GM18951 (cell line): ENCODE measurements at regions of chr12 and their contacts with region 1.

Region 1: DNA sequence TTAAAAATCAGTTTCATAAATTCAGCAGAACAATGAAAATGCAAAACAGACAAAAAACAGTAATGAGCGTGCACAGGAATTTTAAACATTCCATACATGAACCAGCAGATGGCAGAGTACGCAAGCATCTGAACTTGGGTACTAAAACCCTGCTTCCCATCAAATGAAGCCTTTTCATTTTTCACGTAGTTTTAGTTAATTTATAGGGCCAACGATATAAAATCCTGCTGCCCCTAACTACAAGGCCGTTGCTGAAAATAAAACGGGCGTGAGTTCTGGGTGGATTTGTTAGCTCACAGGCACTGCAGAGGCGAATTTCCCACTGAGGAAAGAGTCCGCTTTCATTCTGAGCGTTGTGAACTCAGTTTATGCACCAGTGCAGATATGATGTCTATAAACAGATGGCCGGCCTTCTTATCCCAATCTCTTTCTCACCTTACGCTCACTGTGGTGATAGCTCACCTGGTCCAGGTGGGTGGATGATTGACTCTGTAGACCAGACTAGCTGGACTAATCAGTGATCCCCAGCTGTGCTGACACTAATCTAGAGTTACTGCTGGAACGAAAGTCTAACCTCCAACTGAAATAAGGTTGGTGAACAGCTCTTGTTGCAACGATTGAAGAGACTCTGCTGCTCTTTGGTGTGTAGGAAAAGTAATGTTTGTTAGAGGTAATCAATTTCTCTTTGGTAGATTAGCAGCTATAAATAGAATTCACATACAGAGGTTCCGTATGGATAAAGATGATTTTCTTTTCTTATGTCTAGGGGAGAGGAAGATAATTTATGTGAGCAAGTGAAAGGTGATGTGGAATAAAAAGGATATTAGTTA is 89.2 kb downstream of the PDZRN4 start:
- POLR2A ChIP-seq: no peak

Region 2: DNA sequence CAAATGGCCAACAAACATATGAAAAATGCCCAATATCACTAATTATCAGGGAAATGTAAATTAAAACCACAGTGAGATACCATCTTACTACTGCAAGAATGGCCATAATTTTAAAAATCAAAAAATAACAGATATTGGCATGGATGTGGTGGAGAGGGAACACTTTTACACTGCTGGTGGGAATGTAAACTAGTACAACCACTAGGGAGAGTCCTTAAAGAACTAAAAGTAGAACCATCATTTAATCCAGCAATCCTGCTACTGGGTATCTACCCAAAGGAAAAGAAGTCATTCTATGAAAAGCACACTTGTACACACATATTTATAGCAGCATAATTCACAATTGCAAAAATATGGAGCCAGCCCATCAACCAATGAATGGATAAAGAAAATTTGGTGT is 407.7 kb after region 1 on chr12:
- in situ Hi-C with region 1: no loop called
- POLR2A ChIP-seq: no peak

Region 3: GRCh38 chr12:42023733-42024494 is 746.6 kb after region 1 on chr12:
- in situ Hi-C with region 1: loop called (anchors 25 kb)
- POLR2A ChIP-seq: no peak

Region 4: GRCh38 chr12:42325653-42326474 is 1048.5 kb after region 1 on chr12 and contains the starts of genes PPHLN1 and ZCRB1:
- in situ Hi-C with region 1: loop called (anchors 25 kb)
- POLR2A ChIP-seq: peak; percentile 82